Naive thymus-derived CD8-positive, alpha-beta T cell (primary cell): ENCODE measurements at regions of chr15 and their contacts with region 1.

Region 1: DNA sequence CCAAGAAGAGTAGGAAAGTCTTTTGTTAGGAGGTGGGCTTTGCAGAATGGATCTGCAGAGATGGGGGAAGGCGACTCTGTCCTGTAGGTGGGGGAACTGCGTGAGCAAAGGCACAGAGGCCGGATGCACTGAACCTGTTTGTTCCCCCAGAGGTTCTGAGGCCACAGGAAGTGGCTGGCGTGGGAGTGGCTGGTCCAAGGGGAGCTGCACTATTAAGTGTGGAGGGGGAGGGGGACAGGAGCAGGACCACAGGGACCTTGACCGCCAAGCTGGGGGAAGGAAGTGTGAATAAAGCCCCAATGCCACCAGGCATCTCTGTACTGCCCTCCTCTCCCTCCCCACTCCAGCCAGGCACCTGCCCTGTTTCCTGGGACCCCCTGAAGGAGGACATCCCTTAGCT is 51.8 kb downstream of the CYP11A1 start:
- DNase-seq: peak in 5 of 10 donors; percentile 12 to 31 (median 20)
- ATAC-seq: peak; percentile 29 to 55
- H3K4me3 Mint-ChIP-seq: peak overlapping the region; percentile 66 to 86 (median 78)
- H3K27ac Mint-ChIP-seq: peak overlapping the region; percentile 69 to 96 (median 85)
- H3K4me1 Mint-ChIP-seq: peaks cover 35 to 88% (median 75%) of the 10 kb centered on the region in 4 donors
- H3K27me3 Mint-ChIP-seq: no peaks in the 10 kb centered on the region

Region 2: DNA sequence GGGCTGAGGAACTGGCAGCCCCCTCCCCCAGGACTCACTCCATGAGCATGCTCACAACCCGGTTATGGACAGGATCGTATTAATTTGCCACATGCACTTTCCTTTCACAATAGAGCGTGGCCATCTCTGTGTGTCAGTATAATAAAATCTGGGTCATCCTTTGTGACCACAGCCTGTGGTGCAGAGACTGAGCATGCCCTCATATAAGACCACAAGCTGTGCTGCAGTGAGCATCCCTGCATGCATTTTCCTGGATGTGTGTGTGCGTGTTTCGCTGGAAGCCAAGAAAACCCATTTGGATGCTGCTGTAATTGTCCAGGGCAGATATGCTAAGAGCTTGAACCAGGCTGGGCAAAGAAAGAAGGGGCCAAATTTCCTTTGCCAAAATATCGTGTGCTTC is 12.1 kb after region 1 on chr15:
- POLR2A ChIA-PET with region 1: interaction called, 10 read pairs
- DNase-seq: no peak
- ATAC-seq: no peak
- H3K4me3 Mint-ChIP-seq: peak overlapping the region in 3 of 10 donors; percentile 23 to 51 (median 37)
- H3K27ac Mint-ChIP-seq: peak overlapping the region in 7 of 10 donors; percentile 3 to 79 (median 71)
- H3K4me1 Mint-ChIP-seq: peaks cover 16 to 21% (median 21%) of the 10 kb centered on the region in 4 donors
- H3K27me3 Mint-ChIP-seq: peaks cover 0 to 7% (median 0%) of the 10 kb centered on the region in 5 donors

Region 3: GRCh38 chr15:74337620-74338390 is 22.2 kb after region 1 on chr15:
- POLR2A ChIA-PET with region 1: no interaction called
- DNase-seq: peak in 1 of 10 donors; percentile 35
- ATAC-seq: no peak
- H3K4me3 Mint-ChIP-seq: no peak overlapping the region
- H3K27ac Mint-ChIP-seq: no peak overlapping the region
- H3K4me1 Mint-ChIP-seq: no peaks in the 10 kb centered on the region
- H3K27me3 Mint-ChIP-seq: no peaks in the 10 kb centered on the region